ENCODE measurements at regions of chr14 and their contacts with region 1.

Region 1: DNA sequence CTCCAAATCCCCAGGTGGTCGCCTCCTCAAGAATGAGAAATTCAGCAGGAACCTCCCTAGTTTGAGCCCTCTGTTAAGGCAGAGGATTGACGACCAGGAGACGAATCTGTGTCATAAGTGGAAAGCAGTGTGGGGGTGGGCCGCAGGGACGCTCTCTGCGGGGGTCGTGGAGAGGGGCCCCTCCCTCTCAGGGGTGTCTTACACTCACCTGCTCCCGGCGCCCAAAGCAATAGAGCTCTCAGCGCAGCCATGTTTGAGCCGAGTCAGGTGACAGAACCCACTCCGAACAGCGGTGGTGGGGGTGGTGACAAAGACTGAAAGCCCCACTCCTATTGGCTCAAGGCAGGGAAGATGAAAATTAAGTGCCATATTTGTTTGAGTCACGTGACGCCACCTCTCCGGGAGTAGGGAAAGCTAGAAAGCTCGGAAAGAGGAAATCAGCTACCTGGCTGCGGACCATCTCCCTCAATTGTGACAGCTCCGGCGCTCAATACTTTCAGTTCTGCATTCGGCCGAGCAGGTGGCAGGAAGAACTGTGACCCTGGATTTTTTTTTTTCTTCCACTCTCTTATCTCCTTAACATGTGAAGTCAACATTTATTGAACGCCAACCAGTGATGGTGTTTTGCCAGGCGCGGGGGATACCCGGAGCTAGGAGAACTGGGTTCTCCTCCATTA is at the start of gene ZFYVE26:
- DNase-seq: peak; percentile 87
- ATAC-seq: peak; percentile 95
- total RNA-seq, gene ZFYVE26: 15.5 TPM

Region 2: DNA sequence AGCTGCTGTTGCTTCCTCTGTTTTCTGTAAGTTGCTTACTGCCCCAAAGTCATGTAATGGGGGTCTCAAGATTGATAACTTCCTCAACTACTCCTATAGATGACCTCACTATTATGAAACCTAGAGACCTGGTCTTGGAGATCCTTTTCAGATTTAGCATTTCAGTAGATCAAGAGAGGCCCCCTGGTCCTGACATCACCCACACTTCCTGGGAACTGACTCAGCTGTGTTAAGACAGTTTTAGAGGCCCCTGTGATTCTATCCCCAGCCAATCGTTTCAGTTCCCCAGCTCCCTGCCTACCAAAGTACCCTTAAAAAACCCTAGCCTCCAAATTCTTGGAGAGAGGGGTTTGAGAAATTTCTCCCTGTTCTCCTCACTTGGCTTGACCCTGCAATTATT is 206.0 kb before region 1 on chr14:
- intact Hi-C with region 1: no loop called
- DNase-seq: no peak
- ATAC-seq: no peak

Region 3: GRCh38 chr14:69398053-69398817 is 1581.8 kb after region 1 on chr14 and contains the starts of genes ERH and SLC39A9:
- intact Hi-C with region 1: loop called (anchors 10 kb)
- DNase-seq: peak; percentile 96
- ATAC-seq: peak; percentile 98
- total RNA-seq, gene ERH: 100.0 TPM
- total RNA-seq, gene SLC39A9: 18.4 TPM

Measured in left ventricle myocardium superior (tissue), 1 donor.